T-cell (primary cell): ENCODE measurements at regions of chr2 and their contacts with region 1.

Region 1: GRCh38 chr2:201182650-201183364 is at the start of gene CASP10:
- DNase-seq: peak in 12 of 35 experiments; percentile 3 to 85 (median 23)
- ATAC-seq: peak; percentile 79 to 93 (median 88)
- H3K4me3 ChIP-seq: peak within 1 kb of the TSS; percentile 56 to 91
- H3K4me3 Mint-ChIP-seq: peak within 1 kb of the TSS; percentile 90 to 99 (median 95)
- H3K27ac ChIP-seq: peak within 1 kb of the TSS; percentile 48
- H3K27ac Mint-ChIP-seq: peak within 1 kb of the TSS; percentile 96
- H3K4me1 ChIP-seq: peaks cover 24 to 32% of the 10 kb centered on the region in 2 experiments
- H3K4me1 Mint-ChIP-seq: peaks cover 46 to 52% (median 48%) of the 10 kb centered on the region in 3 donors
- H3K27me3 ChIP-seq: no peaks in the 10 kb centered on the region
- H3K27me3 Mint-ChIP-seq: no peaks in the 10 kb centered on the region
- total RNA-seq, gene CASP10: 23.3 to 46.4 (median 29.2) TPM

Region 2: DNA sequence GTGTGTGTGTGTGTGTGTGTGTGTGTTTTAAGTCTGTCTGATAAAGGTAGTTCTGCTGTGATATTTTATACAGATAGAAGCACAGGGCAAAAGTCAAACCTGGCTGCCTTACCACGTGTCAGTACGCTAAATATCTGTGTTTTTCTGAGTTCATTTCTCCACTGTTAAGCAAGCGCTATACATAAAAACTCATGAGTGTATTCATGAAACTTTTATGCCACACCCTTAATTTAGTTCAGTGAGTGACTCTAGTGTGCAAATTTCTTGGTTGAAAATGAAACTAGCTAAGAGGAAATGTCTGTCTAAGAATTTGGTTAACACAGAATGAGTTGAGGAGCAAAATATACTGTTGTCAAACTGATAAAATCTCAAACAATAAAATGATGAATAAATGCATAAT is 11.3 kb after region 1 on chr2:
- CTCF ChIA-PET with region 1: interaction called, 4 to 28 read pairs
- POLR2A ChIA-PET with region 1: interaction called in 1 of 2 experiments, 5 read pairs
- DNase-seq: peak in 1 of 35 experiments; percentile 48
- ATAC-seq: peak; percentile 44 to 61 (median 60)
- H3K4me3 ChIP-seq: no peak overlapping the region
- H3K4me3 Mint-ChIP-seq: peak overlapping the region; percentile 48 to 74 (median 67)
- H3K27ac ChIP-seq: peak overlapping the region; percentile 73
- H3K27ac Mint-ChIP-seq: peak overlapping the region; percentile 91 to 93
- H3K4me1 ChIP-seq: peaks cover 54 to 62% of the 10 kb centered on the region in 2 experiments
- H3K4me1 Mint-ChIP-seq: peaks cover 74 to 82% (median 81%) of the 10 kb centered on the region in 3 donors
- H3K27me3 ChIP-seq: no peaks in the 10 kb centered on the region
- H3K27me3 Mint-ChIP-seq: no peaks in the 10 kb centered on the region